HEK293T (cell line): ENCODE measurements at regions of chr16 and their contacts with region 1.

Region 1: DNA sequence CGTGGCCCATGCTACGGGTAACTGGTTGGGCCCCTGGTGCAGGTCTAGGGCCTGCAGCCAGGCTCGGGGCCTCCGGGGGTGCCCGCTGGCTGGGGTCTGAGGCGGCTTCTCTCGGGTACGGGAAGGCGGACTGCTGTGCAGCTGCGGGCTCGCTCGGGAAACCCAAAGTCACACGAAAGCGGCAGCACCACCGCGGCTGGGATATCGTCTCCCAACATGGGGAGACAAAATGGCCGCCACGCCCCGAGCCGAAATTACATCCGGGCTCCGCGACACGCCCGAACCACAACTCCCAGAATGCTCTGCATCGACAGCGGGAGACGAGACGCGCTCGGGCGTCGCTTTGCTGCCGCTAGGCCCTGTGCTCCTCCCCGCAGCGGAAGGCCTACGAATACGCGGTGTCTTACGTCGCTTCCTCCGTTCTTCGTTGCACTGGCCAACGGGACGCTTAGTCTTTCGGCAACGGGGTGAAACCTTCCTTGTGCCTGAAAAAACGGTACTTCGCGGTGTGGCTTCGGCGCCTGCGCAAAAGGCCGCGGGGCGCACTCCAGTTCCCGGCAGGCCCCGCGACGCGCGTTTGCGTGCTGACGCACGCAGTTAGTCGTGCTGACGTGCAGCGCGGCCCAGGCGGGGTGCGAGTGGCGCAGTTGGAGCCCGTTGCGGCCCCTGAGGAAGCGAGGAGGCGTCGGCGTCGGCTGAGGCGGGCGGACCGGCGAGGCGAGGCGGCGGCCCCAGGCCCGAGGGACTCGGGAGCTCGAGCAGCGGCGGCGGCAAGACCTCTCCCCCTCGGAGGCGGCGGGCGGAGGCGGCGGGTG is at the start of gene SRRM2:
- DNase-seq: peak; percentile 94

Region 2: DNA sequence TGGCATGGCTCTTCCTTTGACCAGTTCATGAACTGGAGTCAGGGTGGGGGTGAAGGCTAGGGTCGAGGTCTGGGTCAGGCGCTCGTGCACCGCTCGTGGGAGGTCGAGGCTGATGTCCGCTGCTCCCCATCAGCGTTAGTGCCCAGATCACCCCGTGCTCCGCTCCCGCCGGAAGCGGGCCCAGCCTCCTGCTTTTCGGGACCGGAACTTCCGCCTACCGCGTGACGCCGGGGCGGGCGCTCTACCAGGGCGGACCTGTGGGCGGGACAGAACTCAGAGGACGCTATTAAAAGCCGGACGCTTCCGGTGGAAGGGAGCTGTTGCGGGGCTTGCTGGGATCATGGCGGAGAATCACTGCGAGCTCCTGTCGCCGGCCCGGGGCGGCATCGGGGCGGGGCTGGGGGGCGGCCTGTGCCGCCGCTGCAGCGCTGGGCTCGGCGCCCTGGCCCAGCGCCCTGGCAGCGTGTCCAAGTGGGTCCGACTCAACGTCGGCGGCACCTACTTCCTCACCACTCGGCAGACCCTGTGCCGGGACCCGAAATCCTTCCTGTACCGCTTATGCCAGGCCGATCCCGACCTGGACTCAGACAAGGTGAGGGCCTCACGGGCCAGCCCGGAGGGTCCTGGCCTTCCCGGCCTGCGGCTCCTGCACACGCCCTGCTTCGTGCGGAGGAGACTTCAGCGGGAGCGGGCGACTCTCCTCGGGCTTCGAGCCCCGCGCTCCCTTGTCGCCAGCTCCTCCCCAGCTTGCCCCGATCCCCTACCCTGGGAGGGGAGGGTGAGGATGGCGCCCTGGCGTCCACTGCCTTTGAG is 69.8 kb before region 1 on chr16 and contains the start of gene KCTD5:
- CTCF ChIA-PET with region 1: no interaction called
- POLR2A ChIA-PET with region 1: interaction called, 13 read pairs
- DNase-seq: peak; percentile 96

Region 3: GRCh38 chr16:2692948-2693651 is 59.1 kb before region 1 on chr16:
- CTCF ChIA-PET with region 1: no interaction called
- POLR2A ChIA-PET with region 1: no interaction called
- DNase-seq: no peak

Region 4: DNA sequence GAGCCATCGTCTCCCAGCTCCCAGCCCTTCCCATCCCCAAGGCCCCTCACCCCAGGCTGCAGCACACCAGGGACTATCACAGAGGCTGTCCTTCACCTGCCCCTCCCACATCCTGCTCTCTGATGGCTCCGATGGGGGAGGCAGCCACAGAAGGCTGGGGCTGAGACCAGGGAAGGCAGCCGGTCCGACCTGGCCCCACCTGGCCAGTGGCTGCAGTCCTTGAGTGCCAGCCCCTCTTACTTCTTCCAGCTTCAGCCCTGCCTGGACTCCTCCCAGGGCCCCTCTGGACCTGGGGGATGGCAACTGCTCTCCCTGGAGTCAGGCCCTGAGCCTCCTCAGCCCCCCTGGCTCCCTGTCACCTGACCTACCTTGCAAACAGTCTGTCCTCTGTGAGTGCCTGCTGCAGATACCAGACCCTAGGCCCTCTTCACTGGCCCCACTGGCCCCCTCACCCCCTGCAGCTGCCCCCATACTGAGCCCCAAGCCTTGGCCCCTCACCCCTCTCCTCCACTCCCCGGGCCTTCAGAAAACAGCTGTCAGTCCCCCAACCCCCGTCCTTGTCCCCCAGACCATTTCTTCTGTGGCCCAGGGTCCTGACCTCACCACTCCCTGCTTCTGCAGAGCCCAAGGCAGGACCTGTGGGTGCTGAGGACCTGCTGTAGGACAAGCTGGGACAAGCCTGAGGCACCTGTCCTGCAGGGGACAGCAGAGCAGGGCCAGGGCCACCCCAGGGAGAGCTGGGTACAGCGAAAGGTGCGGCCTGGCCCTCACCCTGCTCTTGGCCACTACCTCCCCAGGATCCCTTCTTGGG is 12.4 kb before region 1 on chr16:
- CTCF ChIA-PET with region 1: no interaction called
- POLR2A ChIA-PET with region 1: interaction called, 48 read pairs
- DNase-seq: no peak

Region 5: DNA sequence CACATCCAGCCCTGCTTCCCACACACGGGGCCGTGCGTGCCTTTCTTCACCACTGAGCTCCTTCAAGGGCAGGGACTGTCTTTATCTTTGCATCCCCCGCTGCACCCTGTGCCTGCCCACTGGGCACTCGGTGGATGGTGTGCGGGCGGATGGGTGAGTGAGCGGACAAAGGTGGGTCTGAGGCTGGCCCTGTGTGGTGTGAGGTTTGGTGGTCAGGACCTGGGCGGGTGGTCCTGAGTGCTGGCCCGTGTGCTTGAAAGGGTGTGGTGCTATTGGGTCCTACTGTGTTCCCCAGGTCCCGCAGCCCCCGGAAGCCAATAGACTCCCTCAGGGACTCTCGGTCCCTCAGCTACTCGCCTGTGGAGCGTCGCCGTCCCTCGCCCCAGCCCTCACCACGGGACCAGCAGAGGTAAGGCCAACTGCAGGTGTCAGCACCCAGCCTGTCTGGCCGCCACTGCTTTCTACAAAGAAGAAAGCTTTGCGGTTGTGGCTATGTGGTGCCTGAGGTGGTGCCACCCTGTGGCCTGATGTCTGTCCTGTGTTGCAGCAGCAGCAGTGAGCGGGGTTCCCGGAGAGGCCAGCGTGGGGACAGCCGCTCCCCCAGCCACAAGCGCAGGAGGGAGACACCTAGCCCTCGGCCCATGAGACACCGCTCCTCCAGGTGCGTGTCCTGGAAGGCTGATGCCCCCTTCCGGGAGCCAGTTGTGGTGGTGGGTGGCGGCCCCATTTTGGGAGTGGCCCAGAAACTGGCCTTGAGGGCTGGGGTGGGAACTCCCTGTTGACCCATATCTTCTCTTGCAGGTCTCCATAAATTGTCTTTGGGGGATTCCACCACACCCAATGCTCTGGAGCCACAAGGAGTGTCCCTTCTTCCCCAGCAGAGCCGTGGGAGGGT is 18.1 kb after region 1 on chr16:
- CTCF ChIA-PET with region 1: interaction called, 3 read pairs
- POLR2A ChIA-PET with region 1: interaction called, 42 read pairs
- DNase-seq: no peak

Region 6: DNA sequence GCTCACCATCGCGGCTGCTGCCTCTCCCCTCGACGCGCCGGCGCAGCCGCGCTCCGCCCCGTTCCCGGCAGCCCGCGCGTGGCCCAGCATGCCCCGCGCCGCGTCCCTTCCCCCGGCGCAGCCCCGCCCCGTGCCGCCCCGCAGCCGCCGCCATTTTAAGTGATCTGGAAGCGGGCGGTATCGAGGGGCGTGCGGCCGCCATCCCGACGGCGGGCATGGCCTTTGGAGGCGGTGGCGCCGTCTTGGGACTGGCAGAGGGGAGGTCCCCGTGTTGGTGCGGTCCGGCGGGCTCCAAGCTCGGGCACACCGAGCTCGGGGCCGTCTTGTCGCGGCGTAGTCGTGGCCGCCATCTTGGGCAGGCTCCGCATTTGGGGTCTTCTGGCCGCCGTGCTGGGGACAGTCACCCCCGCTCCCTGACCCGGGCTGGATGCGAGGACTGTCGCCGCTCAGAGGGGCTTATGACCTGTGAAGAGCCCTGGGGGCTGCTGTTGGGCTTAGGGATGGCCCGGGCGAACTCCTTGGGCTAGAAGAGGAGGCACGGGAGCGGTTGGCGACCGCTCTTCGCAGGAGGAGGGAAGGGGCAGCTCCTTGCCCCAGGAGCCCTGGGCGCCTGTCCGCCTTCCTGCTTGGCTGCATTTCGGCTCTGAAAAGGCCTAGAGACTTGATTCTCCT is 25.1 kb after region 1 on chr16 and contains the start of gene ELOB:
- CTCF ChIA-PET with region 1: no interaction called
- POLR2A ChIA-PET with region 1: interaction called, 42 read pairs
- DNase-seq: peak; percentile 94